Caco-2 (cell line): ENCODE measurements at regions of chr2 and their contacts with region 1.

Region 1: GRCh38 chr2:188524519-188525113 is 232.9 kb downstream of the GULP1 start:
- DNase-seq: peak in 1 of 2 experiments; percentile 63
- H3K4me3 ChIP-seq: no peak overlapping the region
- H3K4me3 Mint-ChIP-seq: no peak overlapping the region
- H3K27ac Mint-ChIP-seq: no peak overlapping the region
- H3K4me1 ChIP-seq: no peaks in the 10 kb centered on the region
- H3K4me1 Mint-ChIP-seq: peaks cover 11% of the 10 kb centered on the region
- H3K27me3 ChIP-seq: no peaks in the 10 kb centered on the region
- H3K27me3 Mint-ChIP-seq: no peaks in the 10 kb centered on the region
- CTCF ChIP-seq: peak; percentile 76 to 79

Region 2: GRCh38 chr2:188607239-188607883 is 82.7 kb after region 1 on chr2:
- CTCF ChIA-PET with region 1: no interaction called
- POLR2A ChIA-PET with region 1: no interaction called
- intact Hi-C with region 1: no loop called
- DNase-seq: no peak
- H3K4me3 ChIP-seq: no peak overlapping the region
- H3K4me3 Mint-ChIP-seq: no peak overlapping the region
- H3K27ac Mint-ChIP-seq: no peak overlapping the region
- H3K4me1 ChIP-seq: no peaks in the 10 kb centered on the region
- H3K4me1 Mint-ChIP-seq: no peaks in the 10 kb centered on the region
- H3K27me3 ChIP-seq: no peaks in the 10 kb centered on the region
- H3K27me3 Mint-ChIP-seq: no peaks in the 10 kb centered on the region
- CTCF ChIP-seq: no peak

Region 3: DNA sequence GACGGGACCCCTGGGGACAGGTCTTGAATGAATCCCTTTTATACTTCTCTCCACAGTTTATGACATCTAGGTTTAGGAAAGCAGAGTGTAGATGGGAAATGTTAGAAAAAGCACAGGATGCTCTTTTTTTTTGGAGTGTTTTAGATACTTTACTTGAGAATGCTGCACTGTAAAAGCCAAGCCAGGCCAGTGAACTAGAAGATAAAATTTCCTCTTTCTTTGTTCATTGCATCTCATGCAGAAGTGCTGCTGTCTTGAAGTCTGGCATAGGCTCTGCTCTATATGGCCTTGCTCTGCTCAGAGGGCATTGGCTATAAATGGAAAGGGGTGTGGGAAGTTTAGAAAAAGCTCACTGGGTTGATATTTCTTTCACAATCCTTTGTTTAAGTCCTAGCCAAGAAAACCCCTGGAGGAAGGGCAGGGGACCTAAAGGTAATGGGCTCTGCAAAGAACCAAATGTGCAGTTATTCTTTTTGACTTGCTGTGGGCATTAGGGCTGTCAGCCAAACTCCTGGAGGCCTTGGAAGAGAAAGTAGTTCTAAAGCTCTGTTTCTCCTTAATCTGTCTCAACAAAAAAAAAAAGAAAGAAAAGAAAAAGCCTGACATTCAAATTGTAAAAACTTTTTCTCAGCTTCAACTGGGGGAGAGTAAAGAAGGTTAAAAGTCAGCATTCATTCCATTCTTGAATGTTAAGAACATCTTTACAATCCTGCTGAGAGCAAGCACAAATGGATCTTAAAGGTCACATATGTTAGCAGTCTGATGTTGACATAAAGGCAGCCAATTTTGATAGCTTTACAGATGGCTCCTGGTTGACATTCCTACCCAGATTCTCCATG is 105.3 kb after region 1 on chr2:
- CTCF ChIA-PET with region 1: no interaction called
- POLR2A ChIA-PET with region 1: no interaction called
- intact Hi-C with region 1: loop called (anchors 5 kb)
- DNase-seq: no peak
- H3K4me3 ChIP-seq: no peak overlapping the region
- H3K4me3 Mint-ChIP-seq: no peak overlapping the region
- H3K27ac Mint-ChIP-seq: peak overlapping the region; percentile 29
- H3K4me1 ChIP-seq: peaks cover 18% of the 10 kb centered on the region
- H3K4me1 Mint-ChIP-seq: no peaks in the 10 kb centered on the region
- H3K27me3 ChIP-seq: no peaks in the 10 kb centered on the region
- H3K27me3 Mint-ChIP-seq: no peaks in the 10 kb centered on the region
- CTCF ChIP-seq: no peak

Region 4: DNA sequence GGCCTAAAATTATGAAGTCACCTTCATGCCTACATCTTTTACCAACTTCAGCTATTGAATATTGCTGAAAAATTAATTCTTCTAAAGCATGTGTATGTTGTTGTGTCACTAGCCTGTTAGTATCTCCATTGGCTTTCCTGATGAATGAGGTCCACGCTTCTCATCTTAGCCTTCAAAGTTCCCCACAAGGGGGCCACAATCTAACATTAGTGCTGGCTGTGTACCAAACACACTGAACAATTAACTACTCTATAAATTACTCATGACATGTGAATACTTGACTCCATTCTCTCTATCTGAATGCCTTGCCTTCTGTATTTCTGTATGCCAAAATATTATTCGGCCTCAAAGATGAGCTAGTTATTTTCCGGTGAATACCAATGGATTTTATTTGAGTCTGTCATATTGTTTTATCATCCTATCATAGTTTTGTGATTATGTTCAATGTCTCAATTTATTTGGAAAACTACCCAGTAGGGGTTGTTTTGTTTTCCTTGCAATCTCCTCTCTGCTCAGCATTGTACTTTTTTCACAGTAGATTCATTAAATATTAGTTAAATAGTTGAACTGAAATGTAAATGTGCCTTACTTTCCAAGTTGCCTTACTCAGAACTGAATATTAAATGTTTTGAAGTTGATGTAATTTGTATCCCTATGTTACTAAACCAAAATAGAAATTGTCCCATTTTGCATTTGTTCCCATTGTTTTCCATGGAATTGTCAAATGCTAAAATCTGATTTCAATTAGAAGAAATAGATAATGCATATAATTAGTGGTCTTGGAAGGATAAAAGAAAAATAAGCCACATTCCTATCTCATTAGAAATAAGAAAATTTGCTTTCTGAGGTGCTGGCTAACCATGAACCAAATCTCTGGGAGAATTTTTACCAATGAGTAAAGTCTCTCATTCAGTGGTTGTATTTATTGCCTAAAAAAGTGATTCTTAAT is 241.2 kb after region 1 on chr2:
- CTCF ChIA-PET with region 1: no interaction called
- POLR2A ChIA-PET with region 1: no interaction called
- intact Hi-C with region 1: loop called (anchors 1 kb)
- DNase-seq: peak; percentile 48 to 62
- H3K4me3 ChIP-seq: no peak overlapping the region
- H3K4me3 Mint-ChIP-seq: no peak overlapping the region
- H3K27ac Mint-ChIP-seq: no peak overlapping the region
- H3K4me1 ChIP-seq: no peaks in the 10 kb centered on the region
- H3K4me1 Mint-ChIP-seq: no peaks in the 10 kb centered on the region
- H3K27me3 ChIP-seq: no peaks in the 10 kb centered on the region
- H3K27me3 Mint-ChIP-seq: peaks cover 2% of the 10 kb centered on the region
- CTCF ChIP-seq: peak; percentile 39 to 75

Region 5: DNA sequence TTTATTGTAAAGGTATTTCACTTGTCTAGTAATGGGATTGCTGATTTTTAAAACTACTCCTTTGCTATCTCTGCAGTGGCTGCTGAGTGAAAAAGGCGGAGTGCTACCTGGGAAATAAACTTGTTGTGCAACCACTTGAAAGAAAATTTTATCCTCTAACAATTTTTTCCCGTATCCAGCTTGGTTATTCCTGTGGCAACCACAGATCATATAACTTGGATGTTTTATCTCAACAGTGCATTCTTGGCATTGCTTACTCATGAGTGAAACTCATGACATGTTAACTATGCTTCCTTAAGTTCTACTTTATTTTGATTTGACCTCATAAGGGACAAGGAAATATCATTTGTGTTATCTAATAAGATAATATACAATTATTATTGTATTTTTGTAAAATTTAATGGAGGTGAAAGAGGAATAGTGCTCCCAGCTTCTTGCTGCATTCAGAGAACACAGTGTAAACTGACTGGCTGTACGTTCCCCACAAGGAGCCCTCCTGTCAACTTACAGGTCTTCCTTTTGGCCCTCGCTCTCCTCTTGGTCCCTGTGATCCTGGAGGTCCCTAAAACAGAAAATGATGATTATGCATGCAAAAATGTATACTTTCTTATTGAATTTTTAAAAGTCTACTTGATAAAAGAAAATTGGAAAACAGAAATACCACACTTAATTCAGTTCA is 572.3 kb after region 1 on chr2:
- CTCF ChIA-PET with region 1: no interaction called
- POLR2A ChIA-PET with region 1: no interaction called
- intact Hi-C with region 1: loop called (anchors 10 kb)
- DNase-seq: peak in 1 of 2 experiments; percentile 52
- H3K4me3 ChIP-seq: no peak overlapping the region
- H3K4me3 Mint-ChIP-seq: no peak overlapping the region
- H3K27ac Mint-ChIP-seq: peak overlapping the region; percentile 70
- H3K4me1 ChIP-seq: peaks cover 19% of the 10 kb centered on the region
- H3K4me1 Mint-ChIP-seq: peaks cover 21% of the 10 kb centered on the region
- H3K27me3 ChIP-seq: no peaks in the 10 kb centered on the region
- H3K27me3 Mint-ChIP-seq: no peaks in the 10 kb centered on the region
- CTCF ChIP-seq: no peak

Region 6: DNA sequence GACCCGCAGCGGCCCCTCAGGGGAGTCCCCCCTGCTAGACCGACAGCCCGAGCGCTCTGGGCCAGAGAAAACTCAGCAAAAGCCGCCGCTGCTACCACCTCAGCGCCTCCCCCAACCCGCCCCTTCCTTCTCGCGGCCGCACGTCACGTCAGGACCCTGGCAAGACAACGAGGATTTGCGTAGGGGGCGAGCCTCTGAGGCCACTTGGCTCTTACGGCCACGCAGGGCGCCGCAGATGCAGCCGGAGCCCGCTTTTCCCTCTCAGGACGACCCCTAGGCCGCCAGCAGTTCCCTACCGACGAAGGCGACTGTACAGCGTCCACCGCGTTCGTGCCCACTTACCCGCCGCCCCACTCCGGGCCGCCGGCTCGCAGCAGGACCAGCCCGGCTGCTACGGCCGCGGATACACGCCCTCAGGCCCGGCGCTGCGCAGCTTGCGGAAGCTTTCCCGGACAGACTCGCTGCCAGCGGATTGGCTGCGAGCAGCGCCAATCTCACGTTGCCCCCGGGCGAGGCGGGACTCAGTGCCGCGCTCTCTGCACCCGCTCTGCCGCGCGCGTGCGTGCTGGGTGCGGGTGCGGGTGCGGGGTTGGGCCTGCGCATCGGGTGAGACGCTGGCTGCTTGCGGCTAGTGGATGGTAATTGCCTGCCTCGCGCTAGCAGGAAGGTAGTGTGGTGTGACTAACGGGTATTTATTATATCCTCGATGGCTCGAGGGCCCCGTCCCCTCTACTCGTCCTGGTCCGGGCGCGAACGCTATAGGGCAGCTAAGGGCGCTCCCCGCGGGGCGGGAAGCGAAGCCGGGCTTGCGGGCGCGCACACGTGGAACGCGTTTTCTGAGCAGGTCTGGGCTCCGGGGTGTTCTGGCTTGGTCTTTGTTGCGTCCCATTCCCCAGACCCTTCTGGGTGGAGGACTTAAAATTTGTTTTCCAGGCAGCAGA is 1259.6 kb after region 1 on chr2 and contains the starts of genes ORMDL1 and PMS1:
- CTCF ChIA-PET with region 1: no interaction called
- POLR2A ChIA-PET with region 1: no interaction called
- intact Hi-C with region 1: loop called (anchors 5 kb)
- DNase-seq: peak; percentile 95 to 98
- H3K4me3 ChIP-seq: peak within 1 kb of the TSS; percentile 88
- H3K4me3 Mint-ChIP-seq: peak within 1 kb of the TSS; percentile 83
- H3K27ac Mint-ChIP-seq: peak within 1 kb of the TSS; percentile 82
- H3K4me1 ChIP-seq: peaks cover 5% of the 10 kb centered on the region; the same call in 1 of the 2 replicates
- H3K4me1 Mint-ChIP-seq: peaks cover 23% of the 10 kb centered on the region
- H3K27me3 ChIP-seq: no peaks in the 10 kb centered on the region
- H3K27me3 Mint-ChIP-seq: no peaks in the 10 kb centered on the region
- CTCF ChIP-seq: no peak
- total RNA-seq, gene ORMDL1: 52.1 and 52.7 TPM in 2 replicates
- total RNA-seq, gene PMS1: 38.1 and 40.2 TPM in 2 replicates